GM23248 (cell line): ENCODE measurements at regions of chr2 and their contacts with region 1.

Region 1: GRCh38 chr2:165417009-165417408 is 52.5 kb upstream of the CSRNP3 start:
- DNase-seq: no peak
- H3K4me3 ChIP-seq: no peak overlapping the region
- H3K27ac ChIP-seq: no peak overlapping the region
- H3K4me1 ChIP-seq: no peaks in the 10 kb centered on the region
- H3K27me3 ChIP-seq: no peaks in the 10 kb centered on the region

Region 2: GRCh38 chr2:165662720-165663119 is 245.7 kb after region 1 on chr2:
- in situ Hi-C with region 1: no loop called
- DNase-seq: no peak
- H3K4me3 ChIP-seq: no peak overlapping the region
- H3K27ac ChIP-seq: no peak overlapping the region
- H3K4me1 ChIP-seq: no peaks in the 10 kb centered on the region
- H3K27me3 ChIP-seq: no peaks in the 10 kb centered on the region

Region 3: GRCh38 chr2:165863810-165864261 is 446.8 kb after region 1 on chr2:
- in situ Hi-C with region 1: loop called (anchors 10 kb)
- DNase-seq: no peak
- H3K4me3 ChIP-seq: no peak overlapping the region
- H3K27ac ChIP-seq: no peak overlapping the region
- H3K4me1 ChIP-seq: no peaks in the 10 kb centered on the region
- H3K27me3 ChIP-seq: no peaks in the 10 kb centered on the region